ENCODE measurements at regions of chr15 and their contacts with region 1.

Region 1: DNA sequence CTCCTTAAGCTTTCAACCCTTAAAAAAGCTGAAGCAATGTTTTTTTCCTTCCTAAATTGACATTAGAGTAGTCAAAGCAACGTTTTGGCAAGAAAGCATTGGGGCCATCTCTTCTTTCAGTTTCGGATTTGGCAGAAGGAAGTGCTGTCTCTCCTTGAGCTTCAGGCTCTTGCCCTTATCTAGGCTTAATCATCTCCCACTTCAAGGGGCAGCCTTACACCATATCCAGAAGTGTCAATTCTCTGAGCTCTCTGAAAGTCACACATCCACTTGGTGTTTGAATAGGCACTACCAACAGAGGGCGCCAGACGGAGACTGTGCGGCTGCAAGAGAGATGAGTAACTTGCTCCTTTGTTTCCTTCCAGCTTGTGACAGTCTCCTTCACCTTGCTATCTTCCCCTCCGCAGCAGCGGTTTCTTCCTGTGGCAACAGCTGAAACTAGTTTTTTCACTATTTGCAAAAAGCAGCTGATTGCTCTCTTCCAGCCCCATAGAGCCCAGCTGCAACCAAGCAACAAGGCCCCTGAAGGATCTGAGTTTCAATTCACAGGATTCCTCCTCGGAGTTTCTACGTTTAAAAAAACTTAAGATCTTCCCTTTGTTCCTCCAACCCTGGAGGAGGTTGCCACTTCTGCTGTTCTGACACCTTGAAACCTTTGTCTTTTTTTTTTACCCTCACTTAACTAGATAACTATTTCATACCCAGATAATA is 147.0 kb upstream of the SLCO3A1 start:
- DNase-seq: peak; percentile 57 to 60
- H3K4me3 ChIP-seq: no peak overlapping the region
- H3K27ac ChIP-seq: no peak overlapping the region
- H3K4me1 ChIP-seq: peaks cover 14% of the 10 kb centered on the region
- H3K27me3 ChIP-seq: no peaks in the 10 kb centered on the region
- CTCF ChIP-seq: peak; percentile 92

Region 2: GRCh38 chr15:90869601-90870353 is 836.7 kb before region 1 on chr15:
- CTCF ChIA-PET with region 1: no interaction called
- POLR2A ChIA-PET with region 1: no interaction called
- intact Hi-C with region 1: no loop called
- DNase-seq: peak; percentile 83
- H3K4me3 ChIP-seq: peak overlapping the region; percentile 73; the same call in 1 of the 2 replicates
- H3K27ac ChIP-seq: peak overlapping the region; percentile 72
- H3K4me1 ChIP-seq: peaks cover 66% of the 10 kb centered on the region
- H3K27me3 ChIP-seq: no peaks in the 10 kb centered on the region
- CTCF ChIP-seq: no peak

Region 3: DNA sequence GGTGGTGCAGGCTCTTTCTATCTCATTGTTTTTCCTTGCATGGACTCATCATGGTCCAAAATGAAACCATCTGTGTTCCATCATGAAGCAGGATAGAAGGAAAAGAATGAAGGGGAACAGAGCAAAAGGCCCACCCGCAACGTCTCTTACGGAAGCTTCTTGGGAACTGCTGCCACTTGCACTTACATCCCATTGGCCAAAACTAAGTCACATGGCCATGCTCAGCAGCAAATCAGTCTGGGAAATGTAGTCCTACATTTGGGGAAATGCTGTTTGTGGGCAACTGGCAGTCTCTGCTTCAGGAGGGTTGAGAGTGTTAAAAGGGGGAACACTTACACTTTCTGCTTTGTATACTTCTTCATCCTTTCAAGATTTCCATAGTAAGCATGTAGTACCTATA is 414.8 kb before region 1 on chr15:
- CTCF ChIA-PET with region 1: no interaction called
- POLR2A ChIA-PET with region 1: no interaction called
- intact Hi-C with region 1: no loop called
- DNase-seq: no peak
- H3K4me3 ChIP-seq: no peak overlapping the region
- H3K27ac ChIP-seq: no peak overlapping the region
- H3K4me1 ChIP-seq: no peaks in the 10 kb centered on the region
- H3K27me3 ChIP-seq: peaks cover 66% of the 10 kb centered on the region
- CTCF ChIP-seq: no peak

Region 4: GRCh38 chr15:91535856-91536500 is 170.5 kb before region 1 on chr15:
- CTCF ChIA-PET with region 1: no interaction called
- POLR2A ChIA-PET with region 1: no interaction called
- intact Hi-C with region 1: loop called (anchors 10 kb)
- DNase-seq: no peak
- H3K4me3 ChIP-seq: no peak overlapping the region
- H3K27ac ChIP-seq: peak overlapping the region; percentile 93
- H3K4me1 ChIP-seq: peaks cover 38% of the 10 kb centered on the region
- H3K27me3 ChIP-seq: no peaks in the 10 kb centered on the region
- CTCF ChIP-seq: no peak

Region 5: GRCh38 chr15:91625497-91625896 is 81.0 kb before region 1 on chr15:
- CTCF ChIA-PET with region 1: interaction called, 20 read pairs
- POLR2A ChIA-PET with region 1: no interaction called
- intact Hi-C with region 1: no loop called
- DNase-seq: peak; percentile 60 to 94
- H3K4me3 ChIP-seq: peak overlapping the region; percentile 12; the same call in 1 of the 2 replicates
- H3K27ac ChIP-seq: peak overlapping the region; percentile 43
- H3K4me1 ChIP-seq: peaks cover 36% of the 10 kb centered on the region
- H3K27me3 ChIP-seq: no peaks in the 10 kb centered on the region
- CTCF ChIP-seq: no peak

Region 6: GRCh38 chr15:91769894-91770293 is 63.4 kb after region 1 on chr15:
- CTCF ChIA-PET with region 1: no interaction called
- POLR2A ChIA-PET with region 1: no interaction called
- intact Hi-C with region 1: no loop called
- DNase-seq: no peak
- H3K4me3 ChIP-seq: no peak overlapping the region
- H3K27ac ChIP-seq: no peak overlapping the region
- H3K4me1 ChIP-seq: no peaks in the 10 kb centered on the region
- H3K27me3 ChIP-seq: no peaks in the 10 kb centered on the region
- CTCF ChIP-seq: no peak

Region 7: GRCh38 chr15:91844928-91845327 is 138.5 kb after region 1 on chr15:
- CTCF ChIA-PET with region 1: interaction called, 6 read pairs
- POLR2A ChIA-PET with region 1: no interaction called
- intact Hi-C with region 1: loop called (anchors 5 kb)
- DNase-seq: no peak
- H3K4me3 ChIP-seq: no peak overlapping the region
- H3K27ac ChIP-seq: no peak overlapping the region
- H3K4me1 ChIP-seq: no peaks in the 10 kb centered on the region
- H3K27me3 ChIP-seq: no peaks in the 10 kb centered on the region
- CTCF ChIP-seq: no peak